HepG2 (cell line): ENCODE measurements at regions of chr17 and their contacts with region 1.

Region 1: GRCh38 chr17:48322060-48322459 is 108.0 kb downstream of the SKAP1 start:
- DNase-seq: no peak
- ATAC-seq: no peak
- H3K4me3 ChIP-seq: no peak overlapping the region
- H3K27ac ChIP-seq: no peak overlapping the region
- H3K4me1 ChIP-seq: no peaks in the 10 kb centered on the region
- H3K27me3 ChIP-seq: no peaks in the 10 kb centered on the region
- CTCF ChIP-seq: no peak
- EP300 ChIP-seq: no peak
- POLR2A ChIP-seq: no peak
- RAD21 ChIP-seq: no peak

Region 2: GRCh38 chr17:48374650-48375230 is 52.7 kb after region 1 on chr17:
- CTCF ChIA-PET with region 1: no interaction called
- POLR2A ChIA-PET with region 1: no interaction called
- in situ Hi-C with region 1: loop called (anchors 5 kb)
- intact Hi-C with region 1: no loop called
- DNase-seq: peak; percentile 49
- ATAC-seq: peak; percentile 93
- H3K4me3 ChIP-seq: no peak overlapping the region
- H3K27ac ChIP-seq: no peak overlapping the region
- H3K4me1 ChIP-seq: peaks cover 6% of the 10 kb centered on the region; the same call in 1 of the 2 replicates
- H3K27me3 ChIP-seq: peaks cover 0 to 6% of the 10 kb centered on the region in 2 experiments; a peak in 1 of 5 replicates
- CTCF ChIP-seq: peak; percentile 65
- EP300 ChIP-seq: no peak
- POLR2A ChIP-seq: no peak
- RAD21 ChIP-seq: peak; percentile 73